Transverse colon (tissue), 4 donors: ENCODE measurements at regions of chr11 and their contacts with region 1.

Region 1: GRCh38 chr11:29025001-29025400 is 916.8 kb downstream of the METTL15 start:
- DNase-seq: no peak
- H3K4me3 ChIP-seq: no peak overlapping the region
- H3K27ac ChIP-seq: no peak overlapping the region
- H3K4me1 ChIP-seq: no peaks in the 10 kb centered on the region
- H3K27me3 ChIP-seq: no peaks in the 10 kb centered on the region
- CTCF ChIP-seq: no peak
- EP300 ChIP-seq: no peak
- POLR2A ChIP-seq: no peak

Region 2: DNA sequence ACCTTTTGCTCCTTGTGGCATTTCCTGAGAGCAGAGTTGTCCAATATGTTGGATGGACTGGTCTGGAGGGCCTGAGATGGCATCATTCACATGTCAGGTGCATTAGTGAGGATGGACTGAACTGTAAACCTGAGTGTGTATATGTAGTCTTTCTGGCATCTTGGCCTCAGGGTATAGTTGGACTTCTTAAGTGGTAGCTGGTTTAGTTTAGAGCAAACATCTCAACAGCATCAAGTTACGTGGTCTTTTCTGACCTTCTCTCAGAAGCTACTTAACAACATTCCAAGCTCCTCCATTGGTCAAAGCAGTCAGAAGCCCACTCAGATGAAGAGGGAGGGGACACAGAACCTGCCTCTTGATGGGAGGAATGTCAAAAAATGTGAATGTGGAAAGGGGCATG is 86.9 kb before region 1 on chr11:
- in situ Hi-C with region 1: loop called in 1 of 4 experiments (anchors 25 kb)
- intact Hi-C with region 1: no loop called
- DNase-seq: no peak
- H3K4me3 ChIP-seq: no peak overlapping the region
- H3K27ac ChIP-seq: no peak overlapping the region
- H3K4me1 ChIP-seq: no peaks in the 10 kb centered on the region
- H3K27me3 ChIP-seq: no peaks in the 10 kb centered on the region
- CTCF ChIP-seq: no peak
- EP300 ChIP-seq: no peak
- POLR2A ChIP-seq: no peak